Activated naive CD4-positive, alpha-beta T cell treated with anti-CD3 and anti-CD28 coated beads for 36 hours (primary cell): ENCODE measurements at regions of chr3 and their contacts with region 1.

Region 1: GRCh38 chr3:31253782-31254181 is 278.9 kb upstream of the STT3B start:
- DNase-seq: peak; percentile 59
- H3K4me3 Mint-ChIP-seq: no peak overlapping the region
- H3K27ac Mint-ChIP-seq: peak overlapping the region; percentile 65
- H3K4me1 Mint-ChIP-seq: peaks cover 51% of the 10 kb centered on the region
- H3K27me3 Mint-ChIP-seq: no peaks in the 10 kb centered on the region

Region 2: GRCh38 chr3:31077021-31077601 is 176.7 kb before region 1 on chr3:
- CTCF ChIA-PET with region 1: interaction called, 3 read pairs
- intact Hi-C with region 1: loop called (anchors 1 kb)
- DNase-seq: peak; percentile 72
- H3K4me3 Mint-ChIP-seq: no peak overlapping the region
- H3K27ac Mint-ChIP-seq: peak overlapping the region; percentile 4
- H3K4me1 Mint-ChIP-seq: peaks cover 18% of the 10 kb centered on the region
- H3K27me3 Mint-ChIP-seq: no peaks in the 10 kb centered on the region

Region 3: GRCh38 chr3:31227131-31227562 is 26.6 kb before region 1 on chr3:
- CTCF ChIA-PET with region 1: no interaction called
- intact Hi-C with region 1: loop called (anchors 1 kb)
- DNase-seq: no peak
- H3K4me3 Mint-ChIP-seq: no peak overlapping the region
- H3K27ac Mint-ChIP-seq: peak overlapping the region; percentile 64
- H3K4me1 Mint-ChIP-seq: peaks cover 87% of the 10 kb centered on the region
- H3K27me3 Mint-ChIP-seq: no peaks in the 10 kb centered on the region

Region 4: DNA sequence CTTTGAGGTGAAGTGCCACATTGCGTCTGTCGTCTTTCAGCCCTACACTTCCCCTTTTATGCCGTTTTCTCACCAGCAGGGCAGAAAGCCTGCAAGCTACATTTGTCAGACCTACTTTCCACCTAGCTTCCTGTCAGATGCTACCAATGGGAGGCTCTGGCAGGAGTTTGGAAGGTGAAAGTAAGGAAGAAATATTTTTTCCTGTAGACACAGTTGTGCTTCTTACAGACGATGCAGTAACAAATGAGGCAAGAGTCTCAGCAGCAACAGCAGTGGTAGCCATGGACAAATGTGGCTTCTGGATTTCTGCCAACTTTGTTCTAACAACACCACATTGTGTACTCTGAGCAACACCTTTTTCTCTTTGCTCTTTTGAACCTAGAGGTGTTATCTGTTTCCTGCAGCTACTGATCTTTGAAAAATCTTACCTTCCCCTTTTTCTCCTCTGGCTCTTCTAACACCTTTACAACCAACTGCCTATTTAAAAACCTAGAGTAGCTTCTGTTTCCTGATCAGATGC is 208.3 kb after region 1 on chr3:
- CTCF ChIA-PET with region 1: no interaction called
- intact Hi-C with region 1: loop called (anchors 1 kb)
- DNase-seq: peak; percentile 56
- H3K4me3 Mint-ChIP-seq: peak overlapping the region; percentile 35
- H3K27ac Mint-ChIP-seq: peak overlapping the region; percentile 70
- H3K4me1 Mint-ChIP-seq: peaks cover 51% of the 10 kb centered on the region
- H3K27me3 Mint-ChIP-seq: no peaks in the 10 kb centered on the region

Region 5: DNA sequence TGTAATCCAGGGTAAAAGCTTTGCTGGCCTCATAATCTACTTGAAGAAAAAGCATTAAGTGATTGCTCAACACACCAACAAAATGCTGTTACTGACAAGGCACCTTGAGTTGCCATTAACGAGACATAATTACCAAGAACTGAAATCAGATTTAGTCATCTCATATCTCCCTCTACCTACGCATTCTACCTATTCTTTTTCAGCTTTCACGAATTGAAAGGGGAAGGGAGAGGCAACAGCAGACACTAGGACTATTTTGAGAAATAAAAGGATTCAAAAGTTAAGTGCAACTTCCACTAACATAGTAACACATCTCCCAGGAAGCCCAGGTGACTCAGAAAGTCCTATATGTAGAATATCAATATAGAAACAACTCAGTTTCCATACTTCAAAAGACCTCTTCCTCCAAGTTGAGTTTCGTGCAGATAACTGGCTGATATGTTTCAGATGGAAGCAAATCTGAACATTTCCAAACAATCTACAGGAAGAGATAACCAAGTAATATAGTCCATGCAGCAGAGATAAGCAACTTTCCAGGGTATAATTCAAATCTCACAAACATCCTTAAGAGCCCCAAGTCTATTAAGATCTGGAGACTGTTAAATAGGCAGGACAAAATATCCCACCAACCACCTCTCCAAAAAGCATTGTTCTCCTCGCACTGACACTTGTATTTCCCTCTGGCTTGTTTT is 725.4 kb after region 1 on chr3:
- CTCF ChIA-PET with region 1: no interaction called
- intact Hi-C with region 1: loop called (anchors 1 kb)
- DNase-seq: peak; percentile 37
- H3K4me3 Mint-ChIP-seq: peak overlapping the region; percentile 78
- H3K27ac Mint-ChIP-seq: peak overlapping the region; percentile 43
- H3K4me1 Mint-ChIP-seq: peaks cover 26% of the 10 kb centered on the region
- H3K27me3 Mint-ChIP-seq: peaks cover 49% of the 10 kb centered on the region